Pancreas (tissue), 10 donors: ENCODE measurements at regions of chr5 and their contacts with region 1.

Region 1: GRCh38 chr5:171913987-171914273 is 92.5 kb downstream of the FBXW11 start:
- DNase-seq: no peak
- ATAC-seq: no peak
- H3K4me3 ChIP-seq: no peak overlapping the region
- H3K27ac ChIP-seq: no peak overlapping the region
- H3K4me1 ChIP-seq: peaks cover 8 to 28% (median 17%) of the 10 kb centered on the region in 3 donors
- H3K27me3 ChIP-seq: no peaks in the 10 kb centered on the region
- CTCF ChIP-seq: no peak

Region 2: GRCh38 chr5:171975262-171975876 is 61.4 kb after region 1 on chr5:
- intact Hi-C with region 1: loop called in 1 of 3 experiments (anchors 10 kb)
- DNase-seq: no peak
- ATAC-seq: peak; percentile 24 to 82 (median 64)
- H3K4me3 ChIP-seq: no peak overlapping the region
- H3K27ac ChIP-seq: peak overlapping the region; percentile 3 to 87 (median 52)
- H3K4me1 ChIP-seq: peaks cover 25 to 57% (median 34%) of the 10 kb centered on the region in 3 donors
- H3K27me3 ChIP-seq: no peaks in the 10 kb centered on the region
- CTCF ChIP-seq: no peak

Region 3: DNA sequence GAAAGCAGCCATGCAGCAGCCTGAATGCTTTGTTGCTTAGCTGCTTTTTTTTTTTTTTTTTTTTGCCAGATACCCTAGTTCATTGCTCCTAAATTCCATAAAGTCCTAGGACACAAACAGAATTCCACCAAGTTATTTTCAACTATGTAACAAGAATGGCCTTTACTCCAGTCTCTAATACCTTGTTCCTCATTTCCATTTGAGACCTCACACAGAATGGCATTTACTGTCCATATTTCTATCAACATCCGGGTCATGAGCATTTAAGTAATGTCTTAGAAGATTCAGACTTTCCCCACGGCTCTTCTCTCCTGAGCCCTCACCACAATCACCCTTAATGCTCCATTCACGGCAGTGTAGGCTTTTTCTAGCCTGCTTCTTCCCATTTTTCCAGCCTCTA is 124.2 kb after region 1 on chr5:
- intact Hi-C with region 1: loop called in 2 of 3 experiments (anchors 2 to 5 kb)
- DNase-seq: no peak
- ATAC-seq: no peak
- H3K4me3 ChIP-seq: no peak overlapping the region
- H3K27ac ChIP-seq: no peak overlapping the region
- H3K4me1 ChIP-seq: no peaks in the 10 kb centered on the region
- H3K27me3 ChIP-seq: no peaks in the 10 kb centered on the region
- CTCF ChIP-seq: no peak

Region 4: GRCh38 chr5:172044631-172045314 is 130.8 kb after region 1 on chr5:
- intact Hi-C with region 1: loop called in 2 of 3 experiments (anchors 2 to 5 kb)
- DNase-seq: no peak
- ATAC-seq: no peak
- H3K4me3 ChIP-seq: no peak overlapping the region
- H3K27ac ChIP-seq: no peak overlapping the region
- H3K4me1 ChIP-seq: peaks cover 0 to 7% (median 0%) of the 10 kb centered on the region in 3 donors
- H3K27me3 ChIP-seq: no peaks in the 10 kb centered on the region
- CTCF ChIP-seq: no peak